Activated CD4-positive, alpha-beta T cell treated with anti-CD3 and anti-CD28 coated beads for 36 hours (primary cell): ENCODE measurements at regions of chr6 and their contacts with region 1.

Region 1: DNA sequence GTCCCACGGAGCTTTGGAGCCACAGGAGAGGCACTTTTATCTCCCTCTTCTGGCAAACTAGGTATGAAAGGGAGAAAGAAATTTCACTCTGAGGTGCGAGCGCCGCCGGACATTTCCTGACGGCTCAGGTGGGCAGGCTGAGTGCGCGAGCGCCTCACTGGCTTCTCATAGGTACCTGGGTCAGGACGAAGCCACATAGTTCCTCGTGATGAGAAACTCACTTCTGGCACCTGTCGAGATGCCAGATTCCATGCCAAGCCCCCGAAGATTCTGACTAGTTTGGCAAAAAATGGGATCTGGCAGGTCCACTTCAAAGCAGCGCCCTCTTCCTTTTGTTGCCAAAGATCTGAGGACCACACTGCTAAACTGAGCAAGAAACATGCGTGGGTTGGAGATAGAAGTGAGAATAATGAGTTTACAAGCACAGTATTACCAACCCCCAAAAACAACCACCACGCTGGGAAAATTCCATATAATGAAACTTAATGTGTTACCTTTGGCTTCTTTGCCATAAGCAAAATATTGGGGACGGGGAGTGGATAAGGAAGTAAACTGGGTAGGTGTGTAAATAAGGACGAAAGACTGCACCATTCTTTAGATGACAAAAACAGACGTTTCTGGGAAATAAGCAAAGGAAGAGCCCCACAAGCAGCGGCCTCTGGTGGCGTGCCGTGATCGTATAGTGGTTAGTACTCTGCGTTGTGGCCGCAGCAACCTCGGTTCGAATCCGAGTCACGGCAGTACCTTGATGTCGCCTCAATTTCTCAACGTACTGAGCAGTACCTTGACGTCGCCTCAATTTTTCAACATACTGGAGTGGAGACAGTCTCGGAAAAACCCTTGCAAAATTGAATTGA is 89.8 kb upstream of the PRSS16 start:
- DNase-seq: peak; percentile 91
- ATAC-seq: peak; percentile 84
- H3K4me3 Mint-ChIP-seq: peak overlapping the region; percentile 78
- H3K27ac Mint-ChIP-seq: peak overlapping the region; percentile 92
- H3K4me1 Mint-ChIP-seq: peaks cover 46% of the 10 kb centered on the region
- H3K27me3 Mint-ChIP-seq: no peaks in the 10 kb centered on the region

Region 2: GRCh38 chr6:27078734-27079357 is 78.8 kb before region 1 on chr6:
- CTCF ChIA-PET with region 1: no interaction called
- POLR2A ChIA-PET with region 1: no interaction called
- intact Hi-C with region 1: no loop called
- DNase-seq: peak; percentile 48
- ATAC-seq: peak; percentile 85
- H3K4me3 Mint-ChIP-seq: peak overlapping the region; percentile 42
- H3K27ac Mint-ChIP-seq: no peak overlapping the region
- H3K4me1 Mint-ChIP-seq: no peaks in the 10 kb centered on the region
- H3K27me3 Mint-ChIP-seq: peaks cover 52% of the 10 kb centered on the region

Region 3: GRCh38 chr6:27091661-27092646 is 65.7 kb before region 1 on chr6:
- CTCF ChIA-PET with region 1: no interaction called
- POLR2A ChIA-PET with region 1: no interaction called
- intact Hi-C with region 1: no loop called
- DNase-seq: peak; percentile 60
- ATAC-seq: peak; percentile 92
- H3K4me3 Mint-ChIP-seq: peak overlapping the region; percentile 50
- H3K27ac Mint-ChIP-seq: no peak overlapping the region
- H3K4me1 Mint-ChIP-seq: peaks cover 13% of the 10 kb centered on the region
- H3K27me3 Mint-ChIP-seq: peaks cover 56% of the 10 kb centered on the region

Region 4: DNA sequence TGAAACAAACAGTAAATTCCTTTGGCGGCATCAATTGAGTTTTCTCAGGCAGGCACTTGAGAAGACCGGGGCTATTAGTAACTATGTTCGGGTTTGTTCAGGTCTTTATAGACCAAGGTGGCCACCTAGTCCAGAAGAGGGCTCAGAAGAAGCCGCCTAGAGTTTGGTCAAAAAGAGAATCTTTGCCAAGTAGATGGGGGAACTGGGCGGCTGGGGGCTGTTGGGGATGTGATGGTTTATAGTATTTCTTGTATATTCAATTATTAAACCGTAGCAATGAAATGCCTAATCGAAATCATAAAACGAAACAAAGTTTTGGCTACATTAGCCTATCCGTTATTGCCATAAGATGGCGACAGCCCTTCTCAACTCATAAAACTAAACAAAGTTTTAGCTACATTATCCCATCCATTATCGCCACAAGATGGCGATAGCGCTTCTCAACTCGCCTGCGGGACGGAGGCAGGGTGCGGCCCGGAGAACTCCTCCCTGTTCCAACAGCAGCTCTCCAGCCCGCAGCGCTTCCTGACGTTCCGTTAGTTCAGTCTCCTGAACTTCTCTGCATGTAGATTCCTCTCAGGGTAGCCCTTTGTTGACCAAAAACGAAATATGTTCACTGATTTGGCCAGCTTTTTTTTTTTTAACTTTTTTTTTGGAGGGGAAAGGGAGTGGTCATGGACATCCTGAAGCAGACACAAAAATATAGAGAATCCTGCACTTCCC is 30.7 kb before region 1 on chr6:
- CTCF ChIA-PET with region 1: interaction called, 7 read pairs
- POLR2A ChIA-PET with region 1: interaction called, 3 read pairs
- intact Hi-C with region 1: loop called (anchors 1 kb)
- DNase-seq: peak; percentile 89
- ATAC-seq: peak; percentile 74
- H3K4me3 Mint-ChIP-seq: peak overlapping the region; percentile 68
- H3K27ac Mint-ChIP-seq: peak overlapping the region; percentile 67
- H3K4me1 Mint-ChIP-seq: peaks cover 20% of the 10 kb centered on the region
- H3K27me3 Mint-ChIP-seq: no peaks in the 10 kb centered on the region

Region 5: DNA sequence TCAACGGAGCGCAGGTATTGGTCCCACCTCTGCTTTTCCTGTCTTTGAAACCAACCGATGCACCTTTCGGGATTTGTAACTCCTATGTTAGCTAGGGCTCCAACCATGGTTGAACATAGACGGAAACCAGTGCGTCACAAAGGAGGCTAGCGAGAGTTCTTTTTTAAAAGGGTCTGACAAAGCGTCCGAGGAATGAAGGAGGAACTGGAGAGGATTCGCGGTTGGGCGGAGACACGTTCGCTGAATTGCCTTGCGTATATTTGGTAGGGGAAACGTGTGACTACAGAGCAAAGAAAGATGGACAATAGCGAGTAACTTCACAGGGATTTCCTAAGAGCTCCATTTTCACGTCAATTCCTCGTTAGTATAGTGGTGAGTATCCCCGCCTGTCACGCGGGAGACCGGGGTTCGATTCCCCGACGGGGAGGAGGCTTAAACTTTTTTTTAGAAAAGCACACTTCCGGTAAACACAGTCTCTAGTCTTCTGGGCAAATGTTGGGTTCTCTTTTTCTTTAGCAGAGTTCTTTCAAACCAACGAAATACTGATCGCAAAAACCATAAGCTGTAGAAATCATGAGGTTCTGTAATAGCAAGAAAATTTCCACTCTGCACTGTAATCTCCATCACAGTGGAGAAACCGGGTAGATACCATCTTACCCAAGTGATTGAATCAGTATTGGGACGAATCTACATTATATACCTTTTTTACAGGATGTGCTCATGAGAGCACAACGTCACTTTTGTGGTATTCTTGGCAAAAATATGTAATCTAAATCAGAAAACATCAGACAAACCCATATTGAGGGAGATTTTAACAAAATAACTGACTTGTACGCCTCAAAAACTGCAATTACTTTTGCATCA is 321.9 kb after region 1 on chr6:
- CTCF ChIA-PET with region 1: no interaction called
- POLR2A ChIA-PET with region 1: no interaction called
- intact Hi-C with region 1: loop called in 1 of 2 experiments (anchors 1 kb)
- DNase-seq: peak; percentile 89
- ATAC-seq: peak; percentile 69
- H3K4me3 Mint-ChIP-seq: no peak overlapping the region
- H3K27ac Mint-ChIP-seq: no peak overlapping the region
- H3K4me1 Mint-ChIP-seq: peaks cover 6% of the 10 kb centered on the region
- H3K27me3 Mint-ChIP-seq: no peaks in the 10 kb centered on the region

Region 6: GRCh38 chr6:27553123-27553904 is 395.6 kb after region 1 on chr6:
- CTCF ChIA-PET with region 1: no interaction called
- POLR2A ChIA-PET with region 1: no interaction called
- intact Hi-C with region 1: no loop called
- DNase-seq: peak; percentile 61
- ATAC-seq: peak; percentile 83
- H3K4me3 Mint-ChIP-seq: peak overlapping the region; percentile 29
- H3K27ac Mint-ChIP-seq: no peak overlapping the region
- H3K4me1 Mint-ChIP-seq: peaks cover 5% of the 10 kb centered on the region
- H3K27me3 Mint-ChIP-seq: peaks cover 58% of the 10 kb centered on the region

Region 7: DNA sequence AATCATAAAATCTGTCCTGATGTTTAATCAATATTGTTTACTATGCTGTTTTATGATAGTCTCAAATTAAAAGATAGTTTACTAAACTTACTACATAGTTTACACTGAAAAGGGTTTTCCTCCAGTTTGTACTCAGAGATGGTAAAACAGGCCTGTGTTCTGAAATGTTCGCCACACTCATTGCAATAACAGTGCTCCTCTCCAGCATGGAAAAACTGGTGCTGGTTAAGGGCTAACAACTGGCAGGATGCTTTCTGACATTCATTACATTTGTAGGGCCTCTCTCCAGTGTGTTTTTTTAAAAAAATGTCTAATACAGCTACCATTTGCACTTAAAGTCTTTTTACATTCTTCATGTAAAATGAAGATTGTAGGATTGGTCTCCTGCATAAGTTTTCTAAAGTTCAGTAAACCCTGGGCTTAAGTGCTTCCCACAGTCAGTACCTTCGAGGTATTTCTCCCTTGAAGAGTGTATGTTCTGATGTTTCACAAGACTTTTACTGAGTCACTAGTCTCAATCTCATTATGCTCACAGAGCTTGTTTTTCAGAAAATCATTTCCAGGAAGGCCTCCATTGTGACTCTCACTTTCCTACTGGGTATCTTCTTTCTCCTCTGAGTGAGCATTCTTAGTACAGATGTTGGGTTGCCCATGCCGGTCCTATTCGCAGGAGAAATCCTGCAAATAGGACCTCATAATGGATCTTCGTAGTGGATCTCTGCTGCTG is 1250.6 kb after region 1 on chr6:
- CTCF ChIA-PET with region 1: no interaction called
- POLR2A ChIA-PET with region 1: no interaction called
- intact Hi-C with region 1: no loop called
- DNase-seq: peak; percentile 25
- ATAC-seq: peak; percentile 91
- H3K4me3 Mint-ChIP-seq: no peak overlapping the region
- H3K27ac Mint-ChIP-seq: peak overlapping the region; percentile 64
- H3K4me1 Mint-ChIP-seq: peaks cover 23% of the 10 kb centered on the region
- H3K27me3 Mint-ChIP-seq: peaks cover 42% of the 10 kb centered on the region